Right ventricle myocardium inferior (tissue), 1 donor: ENCODE measurements at regions of chr5 and their contacts with region 1.

Region 1: DNA sequence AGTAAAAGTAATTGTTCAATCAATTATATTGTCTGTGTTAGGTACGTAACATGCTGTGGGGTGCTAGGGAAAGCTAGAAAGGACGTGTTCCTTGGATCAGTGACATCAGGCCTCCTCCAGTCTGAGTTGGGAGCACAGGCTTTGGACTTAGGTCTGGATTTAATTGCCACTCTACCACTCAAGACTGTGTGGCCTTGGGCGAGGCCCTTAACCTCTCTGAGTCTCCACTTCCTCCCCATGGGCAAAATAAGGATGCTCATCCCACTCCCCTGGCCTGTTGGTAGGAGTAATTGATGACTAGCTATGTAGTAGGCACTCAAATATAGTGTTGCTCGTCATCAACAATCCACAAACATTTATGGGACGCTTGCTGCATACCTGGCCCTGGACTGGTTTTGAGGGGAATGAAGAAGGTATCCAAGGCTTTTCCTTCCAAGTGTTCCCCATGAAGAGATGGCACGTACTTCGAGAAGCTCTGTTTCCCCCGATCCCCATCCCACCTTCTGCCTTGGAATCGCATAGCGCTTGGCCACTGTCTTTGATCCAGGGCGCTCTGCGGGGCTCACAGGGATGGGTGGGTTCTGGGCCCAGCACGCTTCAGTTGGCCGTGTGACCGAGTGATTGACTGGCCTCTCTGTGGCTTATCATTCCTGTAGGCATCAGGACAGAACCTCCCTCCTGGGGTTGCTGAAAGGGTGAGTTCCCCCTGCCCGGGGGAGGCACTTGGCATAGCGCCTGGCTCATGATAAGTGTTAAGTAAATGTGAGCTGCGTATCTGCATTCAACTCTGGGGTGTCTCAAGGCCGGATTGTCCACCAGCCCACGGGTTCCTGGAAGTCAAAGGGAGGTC is 8.1 kb downstream of the FGF18 start:
- DNase-seq: peak; percentile 77
- ATAC-seq: peak; percentile 63

Region 2: DNA sequence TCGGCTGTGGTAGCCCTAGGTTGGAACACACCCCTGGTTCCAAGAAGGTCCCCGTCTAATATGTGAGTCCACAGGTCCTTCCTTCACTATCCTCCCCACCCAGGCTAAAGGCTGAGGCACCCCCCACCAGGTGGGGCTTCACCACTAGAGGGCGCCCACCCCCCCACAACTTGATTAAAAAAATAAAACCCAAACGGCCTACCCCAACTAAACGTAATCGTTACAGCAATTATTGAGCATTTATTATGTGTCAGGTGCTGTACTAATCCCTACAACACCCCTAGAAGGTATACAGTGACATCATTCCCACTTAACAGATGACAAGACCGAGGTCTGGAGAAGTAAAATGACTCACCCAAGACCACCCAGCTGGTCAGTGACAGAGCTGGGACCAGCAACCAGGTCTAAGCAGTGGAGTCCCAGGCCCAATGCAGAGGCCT is 56.9 kb after region 1 on chr5:
- intact Hi-C with region 1: no loop called
- DNase-seq: no peak
- ATAC-seq: peak; percentile 23

Region 3: DNA sequence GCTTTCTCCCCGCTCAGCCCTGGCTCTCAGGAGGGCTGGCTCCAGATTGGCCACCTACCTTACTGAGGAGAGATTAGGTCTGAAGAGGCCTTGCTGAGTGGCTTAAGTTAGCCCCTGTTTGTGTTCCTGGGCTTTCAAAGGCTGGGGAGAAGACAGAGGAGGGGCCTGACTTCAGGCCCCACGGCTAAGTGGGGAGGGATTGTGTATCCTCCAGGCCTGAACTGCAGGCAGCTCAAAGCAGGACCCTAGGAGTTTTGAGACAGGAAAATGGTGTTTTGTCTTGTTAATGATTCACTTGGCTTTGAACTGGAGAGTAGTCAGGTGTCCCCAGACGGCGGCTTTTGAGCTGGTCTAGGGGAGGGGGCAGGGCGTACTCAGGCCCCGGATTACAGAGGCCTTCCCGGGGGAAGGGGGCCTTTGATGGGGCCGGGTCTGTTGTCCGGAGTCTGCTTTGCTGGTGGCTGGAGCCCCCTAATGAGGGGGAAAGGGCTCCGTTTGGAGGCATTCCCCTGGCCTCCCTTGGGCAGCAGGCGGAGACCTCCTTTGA is 196.1 kb after region 1 on chr5:
- intact Hi-C with region 1: loop called (anchors 5 kb)
- DNase-seq: no peak
- ATAC-seq: no peak